ENCODE measurements at regions of chr2 and their contacts with region 1.

Region 1: DNA sequence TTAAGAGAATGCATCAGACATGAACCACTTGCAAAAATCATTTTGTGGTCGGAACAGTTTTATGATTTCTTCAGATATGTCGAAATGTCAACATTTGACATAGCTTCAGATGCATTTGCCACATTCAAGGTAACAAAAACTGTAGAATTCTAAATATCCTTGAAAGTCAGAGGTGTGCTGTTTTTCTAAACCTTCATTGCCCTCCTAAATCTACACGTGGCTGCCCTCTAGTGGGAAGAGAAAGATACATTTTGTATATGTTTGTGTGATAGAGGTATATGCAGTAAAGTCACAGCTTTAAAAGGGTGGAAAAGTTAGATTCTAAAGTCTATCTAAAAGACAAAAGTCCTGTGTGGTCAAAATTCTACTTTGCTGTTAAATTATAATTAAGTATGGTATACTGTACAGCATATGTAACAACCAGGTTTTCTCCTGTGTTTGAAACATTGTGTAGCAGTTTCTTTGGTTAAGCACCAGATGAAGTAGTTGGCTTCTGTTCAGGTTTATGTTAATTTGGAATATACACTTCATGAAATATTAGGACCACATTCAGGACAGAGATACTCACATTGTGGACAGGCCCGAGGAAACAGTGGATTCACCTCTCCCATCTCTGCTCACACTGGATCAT is 65.9 kb upstream of the ITM2C start:
- DNase-seq: peak in 3 of 5 donors; percentile 55 to 58 (median 56)
- H3K4me3 ChIP-seq: no peak overlapping the region
- H3K4me3 Mint-ChIP-seq: no peak overlapping the region
- H3K27ac ChIP-seq: no peak overlapping the region
- H3K27ac Mint-ChIP-seq: peak overlapping the region in 6 of 8 donors; percentile 31 to 87 (median 59)
- H3K4me1 ChIP-seq: peaks cover 54% of the 10 kb centered on the region
- H3K4me1 Mint-ChIP-seq: peaks cover 22 to 28% (median 23%) of the 10 kb centered on the region in 3 donors
- H3K27me3 ChIP-seq: no peaks in the 10 kb centered on the region
- H3K27me3 Mint-ChIP-seq: no peaks in the 10 kb centered on the region

Region 2: GRCh38 chr2:230712443-230713330 is 86.2 kb before region 1 on chr2 and contains the start of gene CAB39:
- CTCF ChIA-PET with region 1: interaction called, 34 read pairs
- POLR2A ChIA-PET with region 1: interaction called, 11 read pairs
- DNase-seq: peak; percentile 84 to 91 (median 88)
- H3K4me3 ChIP-seq: peak within 1 kb of the TSS; percentile 96
- H3K4me3 Mint-ChIP-seq: peak within 1 kb of the TSS; percentile 92 to 100 (median 94)
- H3K27ac ChIP-seq: peak within 1 kb of the TSS; percentile 71
- H3K27ac Mint-ChIP-seq: peak within 1 kb of the TSS; percentile 86 to 100 (median 97)
- H3K4me1 ChIP-seq: peaks cover 37% of the 10 kb centered on the region
- H3K4me1 Mint-ChIP-seq: peaks cover 34 to 46% (median 42%) of the 10 kb centered on the region in 3 donors
- H3K27me3 ChIP-seq: no peaks in the 10 kb centered on the region
- H3K27me3 Mint-ChIP-seq: peaks cover 0 to 2% of the 10 kb centered on the region in 2 donors
- total RNA-seq, gene CAB39: 136 to 147 TPM

Region 3: DNA sequence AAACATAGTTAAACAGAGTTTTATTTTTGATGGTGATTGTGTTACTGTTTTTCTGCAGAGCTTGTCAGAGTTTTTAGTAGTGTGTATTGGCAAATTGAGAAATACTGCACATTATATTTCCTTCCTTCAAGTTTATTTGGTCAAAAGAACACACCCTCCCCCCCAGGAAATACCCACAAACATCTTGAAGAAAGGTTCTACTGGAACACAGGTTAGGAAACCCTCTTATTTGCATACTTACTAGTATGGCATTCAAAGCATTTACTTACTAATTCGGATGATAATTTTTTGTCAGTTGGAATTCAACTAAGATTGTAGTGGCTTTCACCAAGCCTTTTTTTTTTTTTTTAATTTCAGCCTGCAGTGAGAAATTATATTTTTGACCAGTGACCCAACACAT is 77.2 kb before region 1 on chr2:
- CTCF ChIA-PET with region 1: interaction called, 10 read pairs
- POLR2A ChIA-PET with region 1: interaction called, 3 read pairs
- DNase-seq: peak in 1 of 5 donors; percentile 7
- H3K4me3 ChIP-seq: no peak overlapping the region
- H3K4me3 Mint-ChIP-seq: peak overlapping the region in 5 of 7 donors; percentile 20 to 63 (median 55)
- H3K27ac ChIP-seq: no peak overlapping the region
- H3K27ac Mint-ChIP-seq: peak overlapping the region in 7 of 8 donors; percentile 31 to 75 (median 62)
- H3K4me1 ChIP-seq: peaks cover 78% of the 10 kb centered on the region
- H3K4me1 Mint-ChIP-seq: peaks cover 75 to 95% (median 87%) of the 10 kb centered on the region in 3 donors
- H3K27me3 ChIP-seq: no peaks in the 10 kb centered on the region
- H3K27me3 Mint-ChIP-seq: no peaks in the 10 kb centered on the region

Region 4: DNA sequence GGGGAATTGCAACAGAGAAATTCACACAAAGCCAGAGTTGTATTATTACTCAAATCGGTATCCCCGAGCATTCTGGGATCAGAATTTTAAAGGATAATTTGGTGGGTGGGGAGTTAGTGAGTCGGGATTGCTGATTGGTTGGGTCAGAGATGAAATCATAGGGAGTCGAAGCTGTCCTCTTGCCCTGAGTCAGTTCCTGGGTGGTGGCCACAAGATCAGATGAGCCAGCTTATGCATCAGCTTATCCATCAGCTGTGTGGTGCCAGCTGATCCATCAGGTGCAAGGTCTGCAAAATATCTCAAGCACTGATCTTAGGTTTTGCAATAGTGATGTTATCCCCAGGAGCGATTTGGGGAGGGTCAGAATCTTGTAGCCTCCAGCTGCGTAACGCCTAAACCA is 31.5 kb after region 1 on chr2:
- CTCF ChIA-PET with region 1: no interaction called
- POLR2A ChIA-PET with region 1: no interaction called
- DNase-seq: no peak
- H3K4me3 ChIP-seq: no peak overlapping the region
- H3K4me3 Mint-ChIP-seq: no peak overlapping the region
- H3K27ac ChIP-seq: no peak overlapping the region
- H3K27ac Mint-ChIP-seq: no peak overlapping the region
- H3K4me1 ChIP-seq: no peaks in the 10 kb centered on the region
- H3K4me1 Mint-ChIP-seq: peaks cover 0 to 11% (median 3%) of the 10 kb centered on the region in 3 donors
- H3K27me3 ChIP-seq: peaks cover 17% of the 10 kb centered on the region
- H3K27me3 Mint-ChIP-seq: peaks cover 33 to 36% of the 10 kb centered on the region in 2 donors

Measured in CD8-positive, alpha-beta memory T cell (primary cell).